Aorta (tissue), 5 donors: ENCODE measurements at regions of chr18 and their contacts with region 1.

Region 1: DNA sequence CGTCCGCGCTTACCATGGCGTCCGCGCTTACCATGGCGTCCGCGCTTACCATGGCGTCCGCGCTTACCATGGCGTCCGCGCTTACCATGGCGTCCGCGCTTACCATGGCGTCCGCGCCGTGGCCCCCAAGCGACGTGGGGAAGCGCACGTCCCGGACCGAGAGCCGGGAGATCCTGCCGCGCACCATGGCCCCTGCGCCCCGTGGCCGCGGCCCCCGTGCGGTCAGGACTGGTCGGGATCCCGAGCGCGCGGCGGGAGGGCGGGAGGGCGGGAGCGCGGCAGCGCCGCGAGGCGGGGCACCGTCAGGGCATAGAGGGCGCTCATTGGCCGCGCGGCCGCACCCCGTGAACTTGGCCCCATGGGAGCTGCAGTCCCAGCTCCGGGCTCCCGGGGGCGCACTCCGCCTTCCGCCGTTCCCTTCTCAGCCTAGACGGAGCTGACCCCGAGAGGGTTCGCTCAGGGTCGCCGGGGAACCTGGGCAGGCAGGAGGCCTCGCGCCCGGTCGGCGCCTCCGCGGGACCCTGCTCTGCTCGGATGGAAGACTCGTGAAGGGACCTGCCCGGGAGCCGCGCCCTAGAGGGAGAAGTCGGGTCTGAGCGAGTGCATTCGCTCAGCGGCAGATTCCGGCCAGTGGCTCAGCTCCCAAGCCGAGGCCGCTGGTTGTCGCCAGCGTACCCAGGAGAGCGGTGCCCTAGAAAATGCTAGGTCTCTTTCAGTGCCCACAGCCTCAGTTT is at the start of gene ENOSF1:
- DNase-seq: peak; percentile 92 to 94
- ATAC-seq: peak; percentile 91
- H3K4me3 ChIP-seq: peak within 1 kb of the TSS; percentile 81 to 85
- H3K27ac ChIP-seq: peak within 1 kb of the TSS in 1 of 2 donors; percentile 7
- H3K4me1 ChIP-seq: no peaks in the 10 kb centered on the region
- H3K27me3 ChIP-seq: no peaks in the 10 kb centered on the region
- total RNA-seq, gene ENOSF1: 45.3 to 88.3 TPM

Region 2: GRCh38 chr18:812376-813171 is 100.0 kb after region 1 on chr18:
- intact Hi-C with region 1: loop called in 1 of 2 experiments (anchors 2 kb)
- DNase-seq: peak; percentile 87 to 95
- ATAC-seq: peak; percentile 92
- H3K4me3 ChIP-seq: peak overlapping the region; percentile 43 to 87
- H3K27ac ChIP-seq: peak overlapping the region; percentile 38 to 89
- H3K4me1 ChIP-seq: no peaks in the 10 kb centered on the region
- H3K27me3 ChIP-seq: no peaks in the 10 kb centered on the region

Region 3: DNA sequence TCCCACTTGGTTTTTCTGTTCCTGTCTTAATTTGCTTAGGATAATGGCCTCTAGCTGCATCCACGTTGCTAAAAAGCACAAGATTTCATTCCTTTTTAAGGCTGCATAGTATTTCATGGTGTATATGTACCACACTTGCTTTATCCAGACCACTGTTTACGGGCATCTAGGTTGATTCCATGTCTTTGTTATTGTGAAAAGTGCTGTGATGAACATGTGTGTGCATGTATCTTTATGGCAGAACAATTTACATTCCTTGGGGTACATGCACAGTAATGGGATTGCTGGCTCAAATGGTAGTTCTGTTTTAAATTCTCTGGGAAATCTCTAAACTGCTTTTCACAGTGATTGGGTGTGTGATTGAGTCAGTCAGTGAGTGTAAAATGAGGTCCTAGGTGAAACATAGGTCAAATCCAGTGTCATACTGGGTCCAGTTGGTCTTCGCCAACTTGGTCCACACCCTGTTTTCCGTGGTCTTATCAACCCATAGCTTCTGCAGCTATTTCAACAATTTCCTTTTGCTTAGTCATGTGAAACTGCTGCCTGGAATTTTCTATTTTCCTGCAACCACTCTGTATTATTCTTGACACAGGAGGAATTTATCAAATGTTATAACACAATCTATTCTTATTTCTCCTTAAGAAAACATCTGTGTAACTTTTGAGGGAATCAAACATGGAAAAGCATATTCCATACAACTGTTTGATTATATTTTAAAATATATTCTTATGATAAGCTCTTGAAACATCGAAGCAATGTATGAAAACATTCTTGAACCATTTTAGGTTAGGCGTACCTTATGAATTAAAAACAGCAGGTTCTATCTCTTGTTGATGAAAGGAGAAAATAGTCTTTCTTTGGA is 275.0 kb after region 1 on chr18:
- intact Hi-C with region 1: no loop called
- DNase-seq: peak in 1 of 2 donors; percentile 64
- ATAC-seq: peak; percentile 67
- H3K4me3 ChIP-seq: no peak overlapping the region
- H3K27ac ChIP-seq: peak overlapping the region in 1 of 2 donors; percentile 34
- H3K4me1 ChIP-seq: peaks cover 3 to 6% of the 10 kb centered on the region in 2 donors
- H3K27me3 ChIP-seq: no peaks in the 10 kb centered on the region

Region 4: GRCh38 chr18:2655178-2655953 is 1942.8 kb after region 1 on chr18 and contains the start of gene SMCHD1:
- intact Hi-C with region 1: loop called in 1 of 2 experiments (anchors 10 kb)
- DNase-seq: peak; percentile 93 to 97
- ATAC-seq: peak; percentile 94
- H3K4me3 ChIP-seq: peak within 1 kb of the TSS; percentile 87
- H3K27ac ChIP-seq: peak within 1 kb of the TSS; percentile 81 to 97
- H3K4me1 ChIP-seq: no peaks in the 10 kb centered on the region
- H3K27me3 ChIP-seq: no peaks in the 10 kb centered on the region
- total RNA-seq, gene SMCHD1: 71.0 to 88.9 TPM